ENCODE measurements at regions of chr14 and their contacts with region 1.

Region 1: GRCh38 chr14:95157327-95158189 is at the start of gene DICER1:
- DNase-seq: peak; percentile 98
- H3K4me3 Mint-ChIP-seq: peak within 1 kb of the TSS; percentile 84
- H3K27ac Mint-ChIP-seq: peak within 1 kb of the TSS; percentile 91
- H3K4me1 Mint-ChIP-seq: peaks cover 19% of the 10 kb centered on the region
- H3K27me3 Mint-ChIP-seq: no peaks in the 10 kb centered on the region
- CTCF ChIP-seq: no peak
- total RNA-seq, gene DICER1: 53.8 and 58.7 TPM in 2 replicates

Region 2: GRCh38 chr14:95431199-95432143 is 273.9 kb after region 1 on chr14:
- CTCF ChIA-PET with region 1: no interaction called
- intact Hi-C with region 1: loop called (anchors 10 kb)
- DNase-seq: peak; percentile 31
- H3K4me3 Mint-ChIP-seq: no peak overlapping the region
- H3K27ac Mint-ChIP-seq: no peak overlapping the region
- H3K4me1 Mint-ChIP-seq: peaks cover 9% of the 10 kb centered on the region
- H3K27me3 Mint-ChIP-seq: no peaks in the 10 kb centered on the region
- CTCF ChIP-seq: peak; percentile 37

Region 3: DNA sequence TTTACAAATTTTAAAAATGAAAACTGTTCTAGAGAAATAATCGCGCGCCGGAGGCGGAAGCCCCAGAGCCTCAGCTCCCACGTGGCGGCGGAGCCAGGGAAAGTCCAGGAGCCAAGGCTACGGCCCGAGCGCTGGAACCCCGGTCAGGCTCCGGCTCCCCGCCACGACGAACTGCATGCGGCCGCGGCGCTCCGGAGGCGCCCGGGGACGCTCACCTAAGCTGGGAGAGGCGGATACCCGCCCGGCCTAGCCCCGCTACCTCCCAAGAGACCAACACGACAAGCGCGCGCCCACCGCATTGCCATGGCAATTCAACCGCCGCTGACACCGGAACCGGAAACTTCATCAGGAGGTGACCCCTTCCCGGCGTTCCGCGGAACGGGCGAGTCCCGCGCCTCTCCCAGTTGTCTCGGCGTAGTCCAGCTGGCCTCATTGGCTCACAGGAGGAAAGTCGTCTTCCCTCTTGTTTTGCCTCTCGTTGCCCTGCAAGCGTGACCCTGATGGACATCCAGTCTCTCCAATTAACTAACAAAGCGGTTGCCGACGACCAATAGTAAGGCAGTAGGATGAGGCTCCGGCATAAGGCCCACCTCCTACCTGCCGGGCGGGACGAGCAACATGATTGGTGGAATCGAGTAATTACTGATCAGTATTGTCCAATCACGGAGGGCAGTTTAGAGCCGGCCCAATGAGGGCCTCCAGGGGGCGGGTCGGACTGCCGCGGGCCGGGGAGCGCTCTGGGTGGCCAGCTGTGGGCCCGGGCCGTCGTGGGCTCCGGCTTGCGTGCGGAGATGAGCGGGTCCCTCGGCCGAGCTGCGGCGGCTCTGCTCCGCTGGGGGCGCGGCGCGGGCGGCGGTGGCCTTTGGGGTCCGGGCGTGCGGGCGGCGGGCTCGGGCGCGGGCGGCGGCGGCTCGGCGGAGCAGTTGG is 377.0 kb after region 1 on chr14 and contains the start of gene GLRX5:
- CTCF ChIA-PET with region 1: no interaction called
- intact Hi-C with region 1: loop called (anchors 10 kb)
- DNase-seq: peak; percentile 97
- H3K4me3 Mint-ChIP-seq: peak within 1 kb of the TSS; percentile 82
- H3K27ac Mint-ChIP-seq: peak within 1 kb of the TSS; percentile 97
- H3K4me1 Mint-ChIP-seq: peaks cover 53% of the 10 kb centered on the region
- H3K27me3 Mint-ChIP-seq: no peaks in the 10 kb centered on the region
- CTCF ChIP-seq: no peak
- total RNA-seq, gene GLRX5: 54.8 and 58.0 TPM in 2 replicates

Measured in Calu3 (cell line).